Natural killer cell (primary cell): ENCODE measurements at regions of chr21 and their contacts with region 1.

Region 1: DNA sequence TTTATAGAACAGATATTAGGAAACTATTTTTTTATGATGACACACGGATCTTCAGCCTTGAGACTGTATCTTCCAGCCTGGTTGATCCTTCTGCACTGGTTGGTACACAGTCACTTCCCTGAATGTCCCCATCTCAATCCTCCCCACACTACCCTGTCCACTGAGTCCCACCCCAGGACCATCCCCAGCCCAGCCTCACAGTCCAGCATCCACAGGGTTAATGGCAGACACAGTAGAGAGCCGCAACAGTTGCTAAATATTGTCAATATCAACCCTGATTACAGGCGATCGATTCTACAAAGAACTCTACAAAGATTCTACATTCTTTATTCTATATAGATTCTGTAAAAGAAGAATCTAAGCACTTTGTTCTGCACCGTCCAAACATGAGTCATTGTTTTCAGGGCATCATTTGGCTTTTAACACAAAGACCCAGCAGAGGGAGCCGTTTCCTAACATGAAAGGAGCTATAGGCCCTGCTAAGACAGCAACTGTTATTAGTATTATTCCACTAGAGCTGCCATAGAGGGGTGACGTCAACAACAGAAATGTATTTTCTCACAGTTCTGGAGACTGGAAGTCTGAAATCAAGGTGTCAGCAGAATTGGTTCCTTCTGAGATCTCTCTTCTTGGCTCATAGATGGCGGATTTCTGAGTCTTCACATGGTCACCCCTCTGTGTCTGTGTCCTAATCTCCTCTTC is 30.1 kb upstream of the IFNAR2 start:
- DNase-seq: peak; percentile 60 to 94
- ATAC-seq: peak; percentile 75 to 91 (median 83)
- H3K4me3 ChIP-seq: no peak overlapping the region
- H3K4me3 Mint-ChIP-seq: no peak overlapping the region
- H3K27ac ChIP-seq: no peak overlapping the region
- H3K27ac Mint-ChIP-seq: peak overlapping the region in 1 of 2 donors; percentile 60
- H3K4me1 ChIP-seq: peaks cover 30% of the 10 kb centered on the region
- H3K4me1 Mint-ChIP-seq: peaks cover 30 to 41% of the 10 kb centered on the region in 2 donors
- H3K27me3 ChIP-seq: peaks cover 2% of the 10 kb centered on the region
- H3K27me3 Mint-ChIP-seq: peaks cover 14 to 33% of the 10 kb centered on the region in 2 donors
- CTCF ChIP-seq: peak; percentile 68

Region 2: GRCh38 chr21:32834916-32835235 is 364.8 kb before region 1 on chr21:
- intact Hi-C with region 1: loop called (anchors 5 kb)
- DNase-seq: no peak
- ATAC-seq: no peak
- H3K4me3 ChIP-seq: no peak overlapping the region
- H3K4me3 Mint-ChIP-seq: no peak overlapping the region
- H3K27ac ChIP-seq: no peak overlapping the region
- H3K27ac Mint-ChIP-seq: no peak overlapping the region
- H3K4me1 ChIP-seq: no peaks in the 10 kb centered on the region
- H3K4me1 Mint-ChIP-seq: no peaks in the 10 kb centered on the region
- H3K27me3 ChIP-seq: peaks cover 2% of the 10 kb centered on the region
- H3K27me3 Mint-ChIP-seq: peaks cover 12% of the 10 kb centered on the region in 2 donors
- CTCF ChIP-seq: no peak

Region 3: GRCh38 chr21:33115631-33116510 is 83.8 kb before region 1 on chr21:
- intact Hi-C with region 1: no loop called
- DNase-seq: peak in 1 of 2 donors; percentile 11
- ATAC-seq: no peak
- H3K4me3 ChIP-seq: no peak overlapping the region
- H3K4me3 Mint-ChIP-seq: no peak overlapping the region
- H3K27ac ChIP-seq: no peak overlapping the region
- H3K27ac Mint-ChIP-seq: no peak overlapping the region
- H3K4me1 ChIP-seq: peaks cover 4% of the 10 kb centered on the region
- H3K4me1 Mint-ChIP-seq: peaks cover 0 to 8% of the 10 kb centered on the region in 2 donors
- H3K27me3 ChIP-seq: peaks cover 9% of the 10 kb centered on the region
- H3K27me3 Mint-ChIP-seq: peaks cover 39 to 52% of the 10 kb centered on the region in 2 donors
- CTCF ChIP-seq: no peak

Region 4: DNA sequence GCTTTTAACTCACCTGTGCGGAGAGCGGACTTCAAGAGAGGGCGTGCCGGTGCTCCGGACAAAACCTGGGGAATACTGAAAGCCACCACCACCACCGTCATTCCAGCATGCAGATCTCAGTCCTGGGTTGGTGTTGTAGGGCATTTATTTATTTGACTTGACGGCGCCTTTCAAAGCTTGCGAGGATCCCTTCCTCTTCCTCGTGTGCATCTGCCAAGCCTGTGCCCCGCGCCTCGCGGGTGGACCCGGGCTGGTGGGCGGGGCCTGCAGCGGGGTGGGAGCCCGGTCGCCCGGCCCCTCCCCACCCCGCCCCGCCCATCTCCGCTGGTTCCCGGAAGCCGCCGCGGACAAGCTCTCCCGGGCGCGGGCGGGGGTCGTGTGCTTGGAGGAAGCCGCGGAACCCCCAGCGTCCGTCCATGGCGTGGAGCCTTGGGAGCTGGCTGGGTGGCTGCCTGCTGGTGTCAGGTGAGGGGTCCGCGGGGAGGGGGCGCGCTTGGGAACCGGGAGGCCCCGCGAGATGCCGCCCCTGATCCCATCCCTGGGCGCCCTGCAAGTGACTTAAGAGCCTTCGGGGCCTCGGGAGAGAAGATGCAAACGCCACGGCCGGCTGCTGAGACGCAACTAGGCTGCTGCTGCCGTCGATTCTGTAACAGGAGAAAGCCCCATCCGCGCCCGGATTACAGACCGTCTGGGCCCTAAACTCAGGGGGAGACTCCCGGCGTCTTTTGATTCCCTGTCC is 66.6 kb after region 1 on chr21 and contains the start of gene IL10RB:
- intact Hi-C with region 1: loop called (anchors 2 kb)
- DNase-seq: peak; percentile 59 to 87
- ATAC-seq: peak; percentile 82 to 88 (median 82)
- H3K4me3 ChIP-seq: peak within 1 kb of the TSS; percentile 97
- H3K4me3 Mint-ChIP-seq: peak within 1 kb of the TSS; percentile 98
- H3K27ac ChIP-seq: peak within 1 kb of the TSS; percentile 88
- H3K27ac Mint-ChIP-seq: peak within 1 kb of the TSS; percentile 94 to 95
- H3K4me1 ChIP-seq: peaks cover 59% of the 10 kb centered on the region
- H3K4me1 Mint-ChIP-seq: peaks cover 61 to 66% of the 10 kb centered on the region in 2 donors
- H3K27me3 ChIP-seq: no peaks in the 10 kb centered on the region
- H3K27me3 Mint-ChIP-seq: no peaks in the 10 kb centered on the region
- CTCF ChIP-seq: no peak
- total RNA-seq, gene IL10RB: 18.4 to 27.8 (median 27.3) TPM

Region 5: DNA sequence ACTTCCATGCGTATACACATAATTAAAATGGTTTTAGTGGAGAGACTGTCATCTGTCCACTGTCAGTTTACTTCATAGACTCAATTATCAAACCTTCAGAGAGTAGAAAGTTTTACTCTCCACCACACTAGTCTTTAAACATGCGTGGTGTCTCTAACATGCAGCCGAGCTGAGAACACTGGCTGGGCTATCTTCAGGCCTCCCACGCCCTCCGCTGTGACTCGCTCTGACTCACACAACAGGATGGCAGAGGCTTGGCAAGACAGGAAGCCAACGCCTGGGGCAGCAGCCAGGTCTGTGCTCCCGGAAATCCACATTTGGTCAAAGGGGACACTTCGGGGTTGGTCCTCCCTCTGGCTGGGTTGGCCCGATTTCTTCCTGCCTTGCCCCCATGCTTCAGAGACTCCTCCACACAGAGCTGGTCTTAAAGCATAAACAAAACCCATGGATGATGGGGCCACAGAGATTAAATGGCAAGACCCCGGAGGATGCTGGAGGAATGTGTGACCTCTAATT is 180.9 kb after region 1 on chr21:
- intact Hi-C with region 1: loop called (anchors 5 kb)
- DNase-seq: peak; percentile 61 to 84
- ATAC-seq: peak; percentile 60 to 79 (median 62)
- H3K4me3 ChIP-seq: no peak overlapping the region
- H3K4me3 Mint-ChIP-seq: peak overlapping the region; percentile 47
- H3K27ac ChIP-seq: peak overlapping the region; percentile 61
- H3K27ac Mint-ChIP-seq: peak overlapping the region; percentile 41 to 72
- H3K4me1 ChIP-seq: peaks cover 63% of the 10 kb centered on the region
- H3K4me1 Mint-ChIP-seq: peaks cover 50 to 53% of the 10 kb centered on the region in 2 donors
- H3K27me3 ChIP-seq: peaks cover 42% of the 10 kb centered on the region
- H3K27me3 Mint-ChIP-seq: peaks cover 46 to 49% of the 10 kb centered on the region in 2 donors
- CTCF ChIP-seq: no peak

Region 6: GRCh38 chr21:33608559-33608958 is 408.9 kb after region 1 on chr21:
- intact Hi-C with region 1: loop called (anchors 5 kb)
- DNase-seq: no peak
- ATAC-seq: no peak
- H3K4me3 ChIP-seq: no peak overlapping the region
- H3K4me3 Mint-ChIP-seq: no peak overlapping the region
- H3K27ac ChIP-seq: no peak overlapping the region
- H3K27ac Mint-ChIP-seq: no peak overlapping the region
- H3K4me1 ChIP-seq: no peaks in the 10 kb centered on the region
- H3K4me1 Mint-ChIP-seq: peaks cover 0 to 5% of the 10 kb centered on the region in 2 donors
- H3K27me3 ChIP-seq: no peaks in the 10 kb centered on the region
- H3K27me3 Mint-ChIP-seq: no peaks in the 10 kb centered on the region
- CTCF ChIP-seq: no peak